ENCODE measurements at regions of chr22 and their contacts with region 1.

Region 1: GRCh38 chr22:39446295-39446721 is 10.5 kb upstream of the MGAT3 start:
- DNase-seq: peak; percentile 51
- ATAC-seq: peak; percentile 61
- H3K4me3 Mint-ChIP-seq: peak overlapping the region; percentile 86
- H3K27ac Mint-ChIP-seq: peak overlapping the region; percentile 90
- H3K4me1 Mint-ChIP-seq: peaks cover 90% of the 10 kb centered on the region
- H3K27me3 Mint-ChIP-seq: no peaks in the 10 kb centered on the region
- CTCF ChIP-seq: no peak

Region 2: DNA sequence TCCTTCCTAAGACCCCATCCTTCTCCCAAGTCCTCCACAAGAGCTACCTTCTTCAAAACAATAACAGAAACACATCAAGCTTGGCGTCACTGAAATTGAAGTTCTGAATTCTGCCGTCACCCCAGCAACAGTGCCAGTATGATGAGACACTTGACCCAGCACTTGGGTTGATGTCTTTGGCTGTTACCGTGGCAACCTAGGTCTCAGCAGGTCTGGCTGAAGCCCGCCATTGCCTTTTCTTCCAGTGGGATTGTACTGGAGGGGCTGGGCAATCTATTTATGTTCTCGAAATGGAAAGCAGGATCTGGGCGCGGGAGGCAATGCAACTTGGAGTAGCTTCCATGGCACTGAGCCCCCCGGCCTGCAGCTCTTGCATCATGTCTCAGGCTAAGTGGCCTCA is 626.3 kb before region 1 on chr22:
- CTCF ChIA-PET with region 1: no interaction called
- POLR2A ChIA-PET with region 1: no interaction called
- intact Hi-C with region 1: no loop called
- DNase-seq: no peak
- ATAC-seq: no peak
- H3K4me3 Mint-ChIP-seq: no peak overlapping the region
- H3K27ac Mint-ChIP-seq: no peak overlapping the region
- H3K4me1 Mint-ChIP-seq: no peaks in the 10 kb centered on the region
- H3K27me3 Mint-ChIP-seq: peaks cover 16% of the 10 kb centered on the region
- CTCF ChIP-seq: no peak

Region 3: GRCh38 chr22:39152511-39153219 is 293.6 kb before region 1 on chr22 and contains the start of gene CBX7:
- CTCF ChIA-PET with region 1: no interaction called
- POLR2A ChIA-PET with region 1: no interaction called
- intact Hi-C with region 1: loop called (anchors 5 kb)
- DNase-seq: peak; percentile 94
- ATAC-seq: peak; percentile 84
- H3K4me3 Mint-ChIP-seq: peak within 1 kb of the TSS; percentile 84
- H3K27ac Mint-ChIP-seq: peak within 1 kb of the TSS; percentile 76
- H3K4me1 Mint-ChIP-seq: peaks cover 46% of the 10 kb centered on the region
- H3K27me3 Mint-ChIP-seq: peaks cover 16% of the 10 kb centered on the region
- CTCF ChIP-seq: no peak
- total RNA-seq, gene CBX7: 42.6 and 45.4 TPM in 2 replicates

Region 4: GRCh38 chr22:39395936-39396796 is 50.1 kb before region 1 on chr22:
- CTCF ChIA-PET with region 1: interaction called, 6 read pairs
- POLR2A ChIA-PET with region 1: interaction called, 20 read pairs
- intact Hi-C with region 1: loop called (anchors 1 kb)
- DNase-seq: no peak
- ATAC-seq: no peak
- H3K4me3 Mint-ChIP-seq: no peak overlapping the region
- H3K27ac Mint-ChIP-seq: no peak overlapping the region
- H3K4me1 Mint-ChIP-seq: peaks cover 10% of the 10 kb centered on the region
- H3K27me3 Mint-ChIP-seq: no peaks in the 10 kb centered on the region
- CTCF ChIP-seq: no peak

Region 5: DNA sequence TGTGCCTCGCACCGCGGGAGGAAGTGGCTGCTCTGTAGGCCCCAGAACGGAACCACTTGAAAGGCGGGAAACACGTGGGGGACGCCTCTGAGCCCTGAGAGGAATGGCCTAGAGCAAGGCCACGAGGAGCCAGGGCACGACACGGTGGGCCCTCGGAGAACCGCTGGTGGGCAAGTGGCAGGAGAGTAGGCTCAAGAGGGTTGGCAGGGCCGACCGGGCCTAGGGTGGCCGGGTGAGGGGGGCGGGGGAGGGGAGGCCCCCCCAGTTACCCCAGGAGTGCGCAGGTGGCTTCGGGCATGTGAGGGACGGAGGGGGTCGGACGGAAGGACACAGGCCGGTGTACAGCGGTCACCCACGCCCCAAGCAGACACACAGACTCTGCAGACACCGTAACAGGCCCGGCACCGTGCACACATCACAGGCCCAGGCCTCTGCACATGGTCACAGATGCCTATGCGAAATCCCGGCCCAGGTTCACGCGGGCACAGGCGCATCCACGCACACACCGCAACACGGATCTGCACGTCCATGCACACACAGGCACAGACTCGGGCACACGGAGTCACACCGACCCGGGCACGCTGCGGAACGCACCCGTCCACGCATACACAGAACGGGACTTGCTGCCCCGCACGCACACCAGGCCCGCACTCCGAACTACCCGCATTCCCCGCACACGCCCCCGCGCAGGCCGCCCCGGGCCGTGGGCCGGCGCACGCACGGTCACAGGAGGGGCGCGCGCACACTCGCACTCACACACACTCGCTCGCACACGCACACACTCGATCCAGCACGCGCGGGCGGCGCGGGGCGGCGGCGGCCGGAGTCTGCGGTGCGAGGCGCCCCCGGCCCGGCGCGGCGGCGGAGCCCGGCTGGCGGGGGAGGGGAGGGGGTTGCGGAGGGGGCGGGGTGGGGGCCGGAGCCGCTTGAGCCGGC is 10.2 kb after region 1 on chr22 and contains the start of gene MGAT3:
- CTCF ChIA-PET with region 1: no interaction called
- POLR2A ChIA-PET with region 1: interaction called, 44 read pairs
- intact Hi-C with region 1: loop called (anchors 1 kb)
- DNase-seq: no peak
- ATAC-seq: peak; percentile 11
- H3K4me3 Mint-ChIP-seq: peak within 1 kb of the TSS; percentile 75
- H3K27ac Mint-ChIP-seq: peak within 1 kb of the TSS; percentile 65
- H3K4me1 Mint-ChIP-seq: peaks cover 67% of the 10 kb centered on the region
- H3K27me3 Mint-ChIP-seq: peaks cover 3% of the 10 kb centered on the region
- CTCF ChIP-seq: no peak
- total RNA-seq, gene MGAT3: 41.5 and 43.4 TPM in 2 replicates

Region 6: GRCh38 chr22:39471381-39472141 is 25.3 kb after region 1 on chr22:
- CTCF ChIA-PET with region 1: interaction called, 4 read pairs
- POLR2A ChIA-PET with region 1: interaction called, 44 read pairs
- intact Hi-C with region 1: loop called (anchors 1 kb)
- DNase-seq: peak; percentile 47
- ATAC-seq: peak; percentile 79
- H3K4me3 Mint-ChIP-seq: peak overlapping the region; percentile 65
- H3K27ac Mint-ChIP-seq: peak overlapping the region; percentile 90
- H3K4me1 Mint-ChIP-seq: peaks cover 73% of the 10 kb centered on the region
- H3K27me3 Mint-ChIP-seq: no peaks in the 10 kb centered on the region
- CTCF ChIP-seq: no peak

Region 7: GRCh38 chr22:39502109-39502788 is 55.9 kb after region 1 on chr22 and contains the start of gene MIEF1:
- CTCF ChIA-PET with region 1: interaction called, 5 read pairs
- POLR2A ChIA-PET with region 1: interaction called, 12 read pairs
- intact Hi-C with region 1: loop called (anchors 2 kb)
- DNase-seq: peak; percentile 89
- ATAC-seq: peak; percentile 96
- H3K4me3 Mint-ChIP-seq: peak within 1 kb of the TSS; percentile 95
- H3K27ac Mint-ChIP-seq: peak within 1 kb of the TSS; percentile 89
- H3K4me1 Mint-ChIP-seq: peaks cover 34% of the 10 kb centered on the region
- H3K27me3 Mint-ChIP-seq: no peaks in the 10 kb centered on the region
- CTCF ChIP-seq: no peak
- total RNA-seq, gene MIEF1: 38.2 and 41.3 TPM in 2 replicates